CD4-positive, alpha-beta T cell (primary cell): ENCODE measurements at regions of chr19 and their contacts with region 1.

Region 1: DNA sequence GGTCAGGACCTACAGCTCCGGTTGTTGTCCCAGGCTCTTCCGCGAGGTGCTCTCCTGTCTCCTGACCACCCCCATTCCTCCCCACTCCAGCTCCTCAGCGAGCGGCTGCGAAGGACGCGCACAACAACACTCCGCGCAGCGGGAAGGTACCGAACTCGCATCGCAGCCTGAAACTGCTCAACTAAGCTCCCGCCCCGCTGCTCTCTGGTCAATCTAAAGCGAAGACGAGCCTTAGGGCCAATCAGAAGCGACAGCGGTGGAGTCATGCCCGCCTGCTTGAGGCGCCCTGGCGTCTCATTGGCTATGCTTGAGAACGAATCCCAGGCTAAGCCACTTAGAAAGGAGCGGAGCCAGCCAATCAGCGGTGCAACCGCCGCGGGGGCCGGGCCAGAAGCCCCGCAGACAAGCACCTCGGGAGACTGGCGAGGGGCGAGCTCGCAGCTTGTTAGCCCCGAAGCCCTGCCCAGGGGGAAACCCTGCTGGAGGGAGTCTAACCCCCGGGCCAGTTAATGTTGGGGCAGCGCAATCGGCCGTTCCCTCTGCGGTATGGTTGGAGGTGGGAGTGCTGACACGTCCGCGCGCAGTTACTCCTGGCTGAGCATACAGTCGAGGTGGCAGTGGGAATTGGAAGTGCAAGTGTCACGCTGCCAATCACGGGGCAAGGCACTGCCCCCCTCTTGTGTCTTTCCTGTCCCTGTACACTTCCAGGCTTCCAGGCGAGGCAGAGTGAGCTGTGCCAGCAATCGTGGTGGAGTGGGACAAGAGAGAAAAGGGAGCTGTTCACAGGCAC is 1.9 kb upstream of the ZBTB32 start:
- DNase-seq: peak; percentile 83 to 97 (median 89)
- ATAC-seq: peak; percentile 99
- H3K4me3 ChIP-seq: peak overlapping the region; percentile 83
- H3K4me3 Mint-ChIP-seq: peak overlapping the region; percentile 94
- H3K27ac ChIP-seq: no peak overlapping the region
- H3K27ac Mint-ChIP-seq: peak overlapping the region; percentile 70
- H3K4me1 ChIP-seq: peaks cover 19% of the 10 kb centered on the region
- H3K4me1 Mint-ChIP-seq: peaks cover 7% of the 10 kb centered on the region
- H3K27me3 ChIP-seq: no peaks in the 10 kb centered on the region
- H3K27me3 Mint-ChIP-seq: no peaks in the 10 kb centered on the region
- CTCF ChIP-seq: no peak

Region 2: DNA sequence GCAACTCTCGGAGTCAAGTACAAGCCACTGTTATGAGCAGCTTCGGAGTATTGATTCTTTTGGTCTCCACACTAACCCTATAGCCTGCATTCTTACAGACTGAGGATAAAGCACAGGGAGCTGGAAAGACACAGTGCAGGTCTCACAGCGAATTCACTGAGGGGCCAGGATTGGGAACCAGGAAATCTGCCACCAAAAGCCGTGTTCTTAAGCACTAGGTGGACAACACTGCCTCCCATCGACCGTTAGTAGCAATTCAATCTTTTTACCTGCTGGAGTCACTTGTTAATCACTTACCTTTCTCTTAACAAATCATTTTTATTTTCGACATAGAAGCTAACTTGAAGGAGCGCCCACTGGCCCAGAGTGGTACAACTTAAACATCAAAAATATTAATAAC is 110.2 kb before region 1 on chr19:
- CTCF ChIA-PET with region 1: no interaction called
- POLR2A ChIA-PET with region 1: no interaction called
- intact Hi-C with region 1: no loop called
- DNase-seq: peak in 4 of 14 experiments; percentile 38 to 71 (median 55)
- ATAC-seq: no peak
- H3K4me3 ChIP-seq: no peak overlapping the region
- H3K4me3 Mint-ChIP-seq: no peak overlapping the region
- H3K27ac ChIP-seq: no peak overlapping the region
- H3K27ac Mint-ChIP-seq: no peak overlapping the region
- H3K4me1 ChIP-seq: no peaks in the 10 kb centered on the region
- H3K4me1 Mint-ChIP-seq: no peaks in the 10 kb centered on the region
- H3K27me3 ChIP-seq: no peaks in the 10 kb centered on the region
- H3K27me3 Mint-ChIP-seq: peaks cover 17% of the 10 kb centered on the region
- CTCF ChIP-seq: peak; percentile 59

Region 3: GRCh38 chr19:35729763-35730162 is 27.3 kb after region 1 on chr19:
- CTCF ChIA-PET with region 1: no interaction called
- POLR2A ChIA-PET with region 1: no interaction called
- intact Hi-C with region 1: no loop called
- DNase-seq: no peak
- ATAC-seq: no peak
- H3K4me3 ChIP-seq: no peak overlapping the region
- H3K4me3 Mint-ChIP-seq: no peak overlapping the region
- H3K27ac ChIP-seq: no peak overlapping the region
- H3K27ac Mint-ChIP-seq: no peak overlapping the region
- H3K4me1 ChIP-seq: no peaks in the 10 kb centered on the region
- H3K4me1 Mint-ChIP-seq: peaks cover 10% of the 10 kb centered on the region
- H3K27me3 ChIP-seq: no peaks in the 10 kb centered on the region
- H3K27me3 Mint-ChIP-seq: no peaks in the 10 kb centered on the region
- CTCF ChIP-seq: no peak

Region 4: DNA sequence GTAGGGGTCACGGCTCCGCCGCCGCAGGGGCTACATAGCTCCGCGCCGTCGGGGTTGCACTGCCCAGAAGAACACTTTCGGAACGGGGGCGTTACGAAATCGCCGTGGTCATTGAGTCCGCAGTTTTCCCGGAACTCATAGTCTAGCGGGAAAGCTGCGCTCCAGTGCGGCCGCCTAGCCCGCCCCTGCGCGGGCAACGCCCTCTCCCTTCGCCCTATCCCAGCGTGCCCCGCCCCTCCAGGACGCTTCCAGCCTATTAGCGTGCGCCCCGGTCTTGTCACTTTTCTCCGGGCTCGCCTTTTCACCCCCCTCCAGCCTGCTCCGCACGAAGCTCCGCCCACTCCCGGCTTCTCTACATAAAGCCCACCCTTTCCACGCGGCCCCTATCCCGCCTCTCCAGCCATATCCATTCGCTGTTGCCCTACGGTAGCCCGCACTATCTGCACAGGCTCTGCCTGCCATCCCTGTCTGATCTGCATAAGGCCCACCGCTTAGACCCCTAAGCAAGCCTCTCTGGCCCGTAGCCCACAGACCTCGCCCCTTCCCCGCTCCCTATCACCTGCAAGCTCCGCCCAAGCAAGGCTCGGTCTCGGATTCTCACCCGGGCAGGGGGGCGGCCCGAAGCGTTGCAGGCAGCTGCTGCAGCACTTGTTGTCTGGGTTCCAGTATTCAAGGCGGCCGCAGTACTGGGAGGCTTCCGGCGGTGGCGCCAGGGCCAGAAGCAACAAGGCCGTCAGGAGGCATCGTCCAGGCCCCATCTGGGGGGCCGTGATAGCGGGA is 38.2 kb after region 1 on chr19:
- CTCF ChIA-PET with region 1: interaction called, 4 read pairs
- POLR2A ChIA-PET with region 1: interaction called, 23 read pairs
- intact Hi-C with region 1: loop called in 1 of 2 experiments (anchors 5 kb)
- DNase-seq: peak; percentile 88 to 97 (median 94)
- ATAC-seq: peak; percentile 60
- H3K4me3 ChIP-seq: peak overlapping the region; percentile 91
- H3K4me3 Mint-ChIP-seq: peak overlapping the region; percentile 99
- H3K27ac ChIP-seq: peak overlapping the region; percentile 62 to 72
- H3K27ac Mint-ChIP-seq: peak overlapping the region; percentile 98
- H3K4me1 ChIP-seq: peaks cover 68% of the 10 kb centered on the region
- H3K4me1 Mint-ChIP-seq: peaks cover 52% of the 10 kb centered on the region
- H3K27me3 ChIP-seq: no peaks in the 10 kb centered on the region
- H3K27me3 Mint-ChIP-seq: no peaks in the 10 kb centered on the region
- CTCF ChIP-seq: no peak

Region 5: DNA sequence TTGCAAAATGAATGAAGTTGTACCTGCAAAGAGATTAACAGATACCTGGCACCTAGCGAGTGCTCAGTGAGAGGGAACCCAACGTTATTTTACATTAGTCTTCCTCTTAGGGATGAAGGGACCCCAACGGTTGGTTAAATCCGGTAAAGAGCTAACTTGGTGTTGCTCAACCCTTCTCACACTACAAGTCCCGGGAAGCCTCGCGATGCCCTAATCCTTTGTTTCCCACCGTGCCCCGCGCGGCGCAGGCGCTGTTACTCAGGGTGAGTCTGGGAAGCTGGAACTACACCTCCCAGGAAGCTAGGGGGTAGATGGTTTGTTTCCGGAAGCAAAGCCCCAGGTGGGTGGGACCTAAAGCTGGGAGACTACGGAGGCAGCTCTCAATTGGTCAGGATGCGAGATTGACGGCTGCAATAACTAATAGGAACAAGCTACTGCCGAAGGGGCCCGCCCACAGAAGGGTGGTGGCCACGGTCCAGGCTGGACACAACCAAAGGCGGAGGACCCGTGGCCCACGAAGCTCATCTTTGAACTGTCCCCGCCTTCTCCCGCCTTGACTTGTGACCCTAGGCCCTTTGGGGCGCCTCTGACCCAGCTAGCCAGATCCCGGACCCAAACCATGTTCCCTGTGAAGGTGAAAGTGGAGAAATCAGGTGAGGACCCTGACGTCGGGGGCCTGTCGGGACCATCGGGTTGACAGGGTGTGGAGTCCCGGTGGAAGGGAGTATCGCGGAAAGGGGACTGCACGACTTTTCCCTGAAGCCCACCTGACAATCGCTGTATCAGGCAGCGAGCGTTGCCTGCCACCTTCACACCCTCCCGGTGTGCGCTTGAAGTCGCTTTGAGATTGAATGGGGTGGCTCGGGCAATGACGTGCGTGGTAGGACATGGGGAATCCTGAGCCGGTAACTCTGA is 45.9 kb after region 1 on chr19 and contains the start of gene LIN37:
- CTCF ChIA-PET with region 1: no interaction called
- POLR2A ChIA-PET with region 1: interaction called, 23 read pairs
- intact Hi-C with region 1: loop called in 1 of 2 experiments (anchors 5 kb)
- DNase-seq: peak; percentile 95 to 100 (median 98)
- ATAC-seq: peak; percentile 70
- H3K4me3 ChIP-seq: peak within 1 kb of the TSS; percentile 94
- H3K4me3 Mint-ChIP-seq: peak within 1 kb of the TSS; percentile 98
- H3K27ac ChIP-seq: peak within 1 kb of the TSS; percentile 61 to 75
- H3K27ac Mint-ChIP-seq: peak within 1 kb of the TSS; percentile 89
- H3K4me1 ChIP-seq: peaks cover 49% of the 10 kb centered on the region
- H3K4me1 Mint-ChIP-seq: peaks cover 37% of the 10 kb centered on the region
- H3K27me3 ChIP-seq: no peaks in the 10 kb centered on the region
- H3K27me3 Mint-ChIP-seq: no peaks in the 10 kb centered on the region
- CTCF ChIP-seq: no peak
- total RNA-seq, gene LIN37: 4.8 to 6.0 TPM